ENCODE measurements at regions of chr14 and their contacts with region 1.

Region 1: DNA sequence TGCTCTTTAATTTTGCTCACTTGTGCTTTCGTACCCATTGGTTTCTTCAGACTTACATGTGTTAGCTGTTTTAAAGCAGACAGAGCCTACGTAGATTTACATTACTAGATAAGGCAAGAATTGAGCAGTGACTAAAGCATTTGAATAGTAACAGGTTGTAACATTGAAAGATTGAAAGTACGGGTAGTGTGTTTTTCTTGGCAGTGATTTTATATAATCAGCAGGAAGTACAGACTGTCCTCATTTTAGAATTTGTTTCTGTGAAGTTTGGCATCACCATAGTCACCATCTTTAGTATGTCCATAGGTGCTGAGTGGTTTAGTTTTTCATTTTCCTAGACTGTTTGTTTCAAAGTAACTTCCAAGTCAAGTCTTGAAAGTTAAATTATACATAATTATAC is 14.0 kb downstream of the RTRAF start:
- DNase-seq: no peak
- ATAC-seq: no peak
- H3K4me3 ChIP-seq: no peak overlapping the region
- H3K27ac ChIP-seq: peak overlapping the region in 1 of 2 donors; percentile 10
- H3K4me1 ChIP-seq: no peaks in the 10 kb centered on the region
- H3K27me3 ChIP-seq: no peaks in the 10 kb centered on the region
- CTCF ChIP-seq: no peak

Region 2: DNA sequence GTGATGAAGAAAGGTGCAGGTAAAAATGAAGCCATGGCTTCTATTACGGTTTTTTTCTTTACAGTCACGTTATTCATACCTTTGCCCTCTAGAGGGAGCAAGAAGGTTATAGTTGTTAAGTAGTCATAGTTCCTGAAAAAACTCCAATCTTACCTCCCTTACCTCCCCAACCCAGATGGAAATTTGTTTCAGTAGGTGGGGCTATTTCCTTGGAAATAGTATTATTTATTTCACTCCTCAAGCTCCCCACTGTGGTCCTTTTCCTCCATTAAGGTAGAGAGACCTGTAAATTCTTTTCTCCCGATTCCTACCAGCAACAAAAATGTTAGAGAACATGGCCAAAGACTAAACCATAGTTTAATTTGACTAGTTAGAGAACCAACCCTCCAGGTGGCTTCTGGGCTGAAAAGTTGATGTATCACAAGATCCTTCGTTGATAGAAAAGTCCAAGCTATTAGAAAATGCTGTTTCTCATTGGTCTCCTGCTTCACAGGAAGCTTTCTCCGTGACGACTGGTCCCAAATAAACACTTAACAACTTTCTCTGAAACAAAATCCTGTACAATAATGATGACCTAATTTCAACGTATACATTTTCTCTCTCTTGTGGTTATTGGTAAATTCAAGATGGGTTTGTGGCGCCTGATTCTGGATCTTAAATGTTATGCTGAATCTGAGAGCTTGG is 719.8 kb before region 1 on chr14:
- intact Hi-C with region 1: no loop called
- DNase-seq: peak in 2 of 4 donors; percentile 59 to 81
- ATAC-seq: peak; percentile 97
- H3K4me3 ChIP-seq: no peak overlapping the region
- H3K27ac ChIP-seq: no peak overlapping the region
- H3K4me1 ChIP-seq: no peaks in the 10 kb centered on the region
- H3K27me3 ChIP-seq: no peaks in the 10 kb centered on the region
- CTCF ChIP-seq: peak; percentile 61 to 62

Region 3: DNA sequence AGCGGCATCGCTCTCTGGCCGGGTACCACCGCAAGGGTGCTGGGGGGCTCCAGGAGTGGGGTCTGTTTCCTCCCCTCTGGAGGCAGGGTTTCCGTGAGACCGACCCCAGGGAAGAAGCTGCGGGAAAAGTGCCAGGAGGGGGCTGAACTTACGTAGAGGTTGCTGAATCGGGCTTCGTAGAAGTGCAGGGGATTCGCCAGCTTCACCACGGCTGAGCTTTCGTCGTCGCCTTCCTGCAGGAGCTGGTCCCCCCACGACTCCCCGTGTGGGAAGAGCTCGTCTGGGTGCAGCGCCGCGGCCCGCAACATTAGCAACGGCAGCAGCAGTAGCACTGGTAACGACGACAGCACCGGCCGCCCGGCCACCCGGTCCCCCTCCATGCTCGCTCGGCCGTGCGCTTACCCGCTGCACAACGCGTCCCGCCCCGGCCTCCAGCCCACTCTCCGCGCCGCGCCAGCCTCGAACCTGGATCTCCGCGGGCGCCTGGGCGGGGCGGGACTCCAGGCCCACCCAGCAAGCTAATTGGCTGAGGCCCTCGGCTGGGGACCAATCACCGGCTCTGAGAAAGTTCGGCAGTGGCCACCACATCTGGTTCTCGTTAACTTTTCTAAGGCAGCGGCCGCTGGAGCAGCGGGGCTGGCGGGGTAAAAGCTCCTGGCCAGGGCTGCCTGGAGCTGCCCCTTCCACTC is 65.4 kb after region 1 on chr14 and contains the start of gene NID2:
- intact Hi-C with region 1: loop called in 1 of 2 experiments (anchors 10 kb)
- DNase-seq: peak; percentile 77 to 94 (median 85)
- ATAC-seq: peak; percentile 86
- H3K4me3 ChIP-seq: peak within 1 kb of the TSS; percentile 46 to 50
- H3K27ac ChIP-seq: peak within 1 kb of the TSS; percentile 57 to 81
- H3K4me1 ChIP-seq: peaks cover 4 to 26% of the 10 kb centered on the region in 2 donors
- H3K27me3 ChIP-seq: peaks cover 29 to 63% of the 10 kb centered on the region in 2 donors
- CTCF ChIP-seq: no peak
- polyA plus RNA-seq, gene NID2: 225 to 593 (median 249) TPM

Measured in left lung (tissue), 14 donors.